ENCODE measurements at regions of chr19 and their contacts with region 1.

Region 1: GRCh38 chr19:13887517-13887916 is 10.6 kb downstream of the NANOS3 start:
- DNase-seq: no peak
- ATAC-seq: no peak

Region 2: DNA sequence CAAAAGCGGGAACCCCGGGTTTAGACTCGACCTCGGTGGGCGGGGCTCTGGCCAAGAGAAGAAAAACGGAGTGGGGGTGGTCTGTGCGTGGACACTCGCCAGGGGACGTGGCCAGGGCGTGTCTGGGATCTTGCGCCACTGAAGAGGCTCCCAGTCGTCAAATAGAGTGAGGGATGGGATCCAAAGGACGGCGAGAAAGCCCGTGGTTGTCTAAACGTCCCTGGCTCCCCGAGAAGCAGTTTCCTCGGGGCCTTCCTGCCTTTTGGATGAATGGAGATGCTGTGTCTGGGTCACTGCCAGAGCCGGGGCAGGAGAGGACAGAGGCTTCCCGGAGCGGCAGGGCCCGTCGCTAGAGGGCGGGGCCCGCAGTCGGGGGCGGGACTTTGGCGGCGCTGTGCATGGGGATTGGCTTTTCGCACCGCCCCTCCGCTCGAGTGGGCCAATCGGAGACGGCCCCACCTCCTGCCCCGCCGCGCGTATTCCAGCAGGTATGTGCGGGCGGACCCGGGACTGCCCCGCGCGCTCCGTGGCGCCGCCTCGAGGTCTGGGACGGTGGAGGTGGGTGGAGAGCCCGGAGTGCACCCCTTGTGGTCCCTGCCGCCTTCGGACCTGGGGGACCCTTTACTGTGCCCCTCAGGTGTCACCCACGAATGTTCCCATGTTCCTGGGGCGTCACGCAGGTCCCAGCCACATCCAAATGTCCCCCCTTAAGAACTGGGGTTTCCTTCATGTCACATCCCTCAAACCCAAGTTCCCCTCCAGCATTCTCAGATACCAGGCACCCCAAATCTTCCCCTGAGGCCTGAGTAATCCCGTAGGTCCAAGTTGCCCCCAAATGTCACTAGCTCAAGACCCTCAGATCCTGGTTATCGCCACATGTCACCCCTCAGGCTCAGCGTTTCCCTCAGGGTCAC is 53.9 kb before region 1 on chr19:
- intact Hi-C with region 1: no loop called
- DNase-seq: peak; percentile 97
- ATAC-seq: peak; percentile 80 to 87

Region 3: DNA sequence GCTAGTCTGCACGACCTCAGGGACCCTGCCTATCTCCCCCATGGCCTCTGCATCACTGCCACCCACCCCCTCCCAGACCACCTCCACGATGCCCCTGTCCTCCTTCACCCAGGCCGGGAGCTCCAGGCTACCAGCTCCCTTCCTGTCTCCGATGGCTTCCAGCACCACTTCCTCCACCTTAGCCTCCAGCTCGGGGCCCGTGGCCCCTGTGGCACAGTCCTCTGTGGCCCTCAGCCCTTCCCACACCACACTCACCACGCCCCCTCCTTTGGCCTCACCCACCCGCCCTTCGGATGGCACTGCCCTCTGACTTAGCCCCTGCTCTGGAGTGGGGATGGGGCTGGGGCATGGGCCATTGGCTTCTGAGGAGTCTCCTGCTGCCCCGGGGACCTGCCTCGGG is 167.2 kb after region 1 on chr19:
- intact Hi-C with region 1: loop called in 1 of 2 experiments (anchors 5 kb)
- DNase-seq: no peak
- ATAC-seq: no peak

Region 4: DNA sequence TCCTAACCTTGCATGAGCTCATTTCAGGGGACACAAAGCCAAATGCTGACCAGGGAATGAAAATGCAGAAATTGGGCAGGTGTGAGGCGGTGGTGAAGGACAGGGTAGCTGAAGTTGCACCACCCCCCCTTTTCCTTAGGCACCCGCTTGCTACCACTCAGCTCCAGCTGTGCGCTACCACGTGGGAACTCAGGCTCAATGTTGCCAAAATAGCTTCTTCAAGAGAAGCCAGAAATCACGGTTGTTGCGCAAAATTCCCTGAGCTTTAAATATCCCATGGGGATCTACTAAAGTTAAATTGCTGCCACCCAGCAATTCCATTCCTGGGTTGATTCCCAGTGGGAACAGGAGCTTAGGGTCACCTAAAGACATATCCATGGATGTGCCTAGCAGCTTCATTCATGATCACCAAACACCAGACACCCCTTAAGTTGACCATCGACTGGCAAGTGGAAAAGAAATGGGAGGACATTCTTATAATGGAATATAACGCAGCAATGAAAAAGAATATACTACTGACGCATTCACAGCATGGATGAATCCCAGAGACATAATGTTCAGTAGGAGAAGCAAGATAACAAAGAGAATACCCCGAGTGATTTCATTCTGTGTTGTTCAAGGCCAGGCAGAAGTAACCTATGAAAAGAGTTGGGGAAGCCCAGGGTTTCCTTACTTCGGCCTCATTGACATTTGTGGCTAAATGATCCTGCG is 331.3 kb after region 1 on chr19:
- intact Hi-C with region 1: no loop called
- DNase-seq: no peak
- ATAC-seq: peak in 1 of 2 donors; percentile 64

Measured in left cardiac atrium (tissue), 4 donors.